Activated CD8-positive, alpha-beta memory T cell treated with anti-CD3 and anti-CD28 coated beads, Interleukin-2, amount 10 ng/mL, durations not matched to agents 7 days and 5 days (primary cell): ENCODE measurements at regions of chr21 and their contacts with region 1.

Region 1: DNA sequence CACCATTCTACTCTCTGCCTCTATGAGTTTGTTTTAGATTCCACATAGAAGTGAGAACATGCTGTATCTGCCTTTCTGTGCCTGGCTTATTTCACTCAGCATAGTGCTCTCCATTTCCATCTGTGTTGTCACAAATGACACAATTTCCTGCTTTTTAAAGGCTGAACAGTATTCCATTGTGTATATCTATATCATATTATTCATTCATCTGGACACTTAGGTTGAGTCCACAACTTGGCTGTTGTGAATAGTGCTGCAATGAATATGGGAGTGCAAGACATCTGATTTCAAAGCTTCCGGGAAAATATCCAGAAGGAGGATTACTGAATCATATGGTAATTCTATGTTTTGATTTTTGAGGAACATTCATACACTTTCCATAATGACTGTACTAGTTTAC is 20.1 kb upstream of the DONSON start:
- DNase-seq: no peak
- ATAC-seq: no peak
- H3K4me3 Mint-ChIP-seq: no peak overlapping the region
- H3K27ac Mint-ChIP-seq: no peak overlapping the region
- H3K4me1 Mint-ChIP-seq: peaks cover 3% of the 10 kb centered on the region
- H3K27me3 Mint-ChIP-seq: no peaks in the 10 kb centered on the region

Region 2: DNA sequence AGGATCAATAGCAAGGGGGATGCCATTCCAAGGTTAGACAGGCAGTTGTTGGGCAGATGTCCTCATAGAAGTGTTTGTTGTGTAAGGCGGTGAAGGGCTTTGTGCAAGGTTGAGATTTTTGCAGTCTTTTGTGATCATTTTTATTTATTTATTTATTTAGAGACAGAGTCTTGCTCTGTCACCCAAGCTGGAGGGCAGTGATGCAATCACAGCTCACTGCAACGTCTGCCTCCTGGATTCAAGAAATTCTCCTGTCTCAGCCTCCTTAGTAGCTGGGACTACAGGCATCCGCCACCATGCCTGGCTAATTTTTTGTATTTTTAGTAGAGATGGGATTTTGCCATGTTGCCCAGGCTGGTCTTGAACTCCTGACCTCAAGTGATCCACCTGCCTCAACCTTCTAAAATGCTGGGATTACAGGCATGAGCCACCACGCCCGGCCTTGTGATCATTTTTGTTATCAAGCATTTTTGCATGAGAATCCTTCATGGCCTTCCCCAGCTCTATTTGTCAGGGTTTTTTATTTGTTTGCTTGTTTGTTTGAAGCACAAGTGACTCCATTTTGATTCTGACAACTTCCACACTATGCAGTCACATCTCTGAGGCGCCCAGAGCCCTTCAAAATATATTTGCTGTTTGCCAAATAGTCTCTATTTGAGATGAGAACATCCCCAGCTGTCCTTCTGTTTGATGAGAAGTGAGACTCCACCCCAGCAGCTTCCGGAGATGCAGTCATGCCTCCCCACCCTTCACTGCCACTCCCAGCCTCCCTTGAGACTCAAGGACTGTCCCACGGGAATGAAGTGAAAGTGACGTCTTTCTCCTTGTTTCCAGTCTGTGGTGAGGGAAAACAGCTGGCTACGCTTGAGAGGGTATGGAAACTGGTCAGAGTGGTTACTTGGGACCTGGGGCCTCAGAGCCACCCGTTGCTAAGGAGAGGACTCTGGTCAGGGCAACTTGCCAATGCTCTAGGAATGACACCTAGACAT is 166.8 kb before region 1 on chr21:
- CTCF ChIA-PET with region 1: interaction called, 10 read pairs
- DNase-seq: no peak
- ATAC-seq: no peak
- H3K4me3 Mint-ChIP-seq: no peak overlapping the region
- H3K27ac Mint-ChIP-seq: no peak overlapping the region
- H3K4me1 Mint-ChIP-seq: peaks cover 3% of the 10 kb centered on the region
- H3K27me3 Mint-ChIP-seq: no peaks in the 10 kb centered on the region

Region 3: GRCh38 chr21:33518899-33519298 is 89.7 kb before region 1 on chr21:
- CTCF ChIA-PET with region 1: interaction called, 16 read pairs
- DNase-seq: no peak
- ATAC-seq: no peak
- H3K4me3 Mint-ChIP-seq: no peak overlapping the region
- H3K27ac Mint-ChIP-seq: no peak overlapping the region
- H3K4me1 Mint-ChIP-seq: peaks cover 14% of the 10 kb centered on the region
- H3K27me3 Mint-ChIP-seq: no peaks in the 10 kb centered on the region

Region 4: DNA sequence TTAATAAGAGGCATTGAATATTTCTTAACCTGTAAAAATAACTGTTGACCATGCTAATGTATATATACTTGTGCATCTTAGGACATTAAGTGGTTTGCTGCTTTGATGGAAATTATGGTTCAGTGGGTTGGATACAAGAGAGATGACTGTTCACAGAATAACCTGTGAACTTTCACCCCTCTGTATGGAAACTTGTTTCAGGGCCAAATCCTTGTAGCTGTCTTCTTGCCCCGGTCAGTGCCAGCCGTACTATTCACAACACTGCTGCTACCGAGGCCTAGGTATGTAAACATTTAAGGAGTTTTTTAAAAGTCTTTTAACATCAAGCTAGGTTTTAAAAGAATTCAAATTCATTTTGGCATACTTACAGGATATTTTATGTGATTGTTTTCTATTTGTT is 36.2 kb before region 1 on chr21:
- CTCF ChIA-PET with region 1: interaction called, 15 read pairs
- DNase-seq: no peak
- ATAC-seq: no peak
- H3K4me3 Mint-ChIP-seq: no peak overlapping the region
- H3K27ac Mint-ChIP-seq: no peak overlapping the region
- H3K4me1 Mint-ChIP-seq: peaks cover 12% of the 10 kb centered on the region
- H3K27me3 Mint-ChIP-seq: no peaks in the 10 kb centered on the region

Region 5: DNA sequence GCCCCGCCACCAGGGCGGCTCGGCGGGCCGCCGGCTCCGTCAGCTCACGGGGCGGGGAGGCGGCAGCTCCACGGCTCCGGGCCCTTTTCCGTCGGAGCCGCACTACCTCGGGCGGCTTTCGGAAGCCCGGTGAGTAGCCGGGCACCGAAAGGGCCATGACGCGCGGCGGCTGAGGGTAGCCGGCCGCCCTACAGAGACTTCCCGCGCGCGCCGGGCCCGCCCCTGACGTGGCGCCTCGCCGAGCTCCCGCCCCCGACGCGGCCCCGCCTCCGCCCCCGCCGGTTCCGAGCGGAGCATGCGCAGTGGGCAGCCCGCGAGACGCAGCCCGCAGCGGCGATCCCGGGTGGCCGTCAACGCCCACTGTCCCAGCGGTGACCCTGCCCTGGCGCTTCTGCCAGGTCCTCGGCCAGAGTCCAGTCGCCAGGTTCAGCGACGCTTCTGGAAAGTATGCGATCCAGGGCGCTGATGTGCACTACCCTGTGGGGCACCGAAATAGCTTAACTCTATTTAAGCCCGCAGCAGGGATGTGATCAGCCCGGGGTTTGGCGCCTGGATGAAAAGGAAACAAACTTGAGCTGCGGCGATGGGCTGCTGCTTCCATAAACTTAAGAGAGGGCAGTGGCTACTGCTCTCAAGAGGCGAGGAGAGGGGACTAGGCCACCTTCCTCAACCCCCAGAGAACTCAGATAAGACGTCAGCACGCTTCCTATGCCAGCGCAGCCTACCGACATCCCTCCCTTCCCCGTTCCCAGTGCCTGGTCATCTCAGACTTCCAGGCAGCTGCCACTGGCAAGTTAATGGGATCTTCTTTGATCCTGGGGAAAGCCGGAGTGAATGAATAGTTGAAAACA is 19.8 kb before region 1 on chr21 and contains the start of gene DONSON:
- CTCF ChIA-PET with region 1: interaction called, 21 read pairs
- DNase-seq: peak; percentile 89
- ATAC-seq: peak; percentile 96
- H3K4me3 Mint-ChIP-seq: peak within 1 kb of the TSS; percentile 91
- H3K27ac Mint-ChIP-seq: peak within 1 kb of the TSS; percentile 88
- H3K4me1 Mint-ChIP-seq: peaks cover 29% of the 10 kb centered on the region
- H3K27me3 Mint-ChIP-seq: no peaks in the 10 kb centered on the region
- total RNA-seq, gene DONSON: 41.6 to 46.3 TPM

Region 6: GRCh38 chr21:33619726-33620125 is 11.2 kb after region 1 on chr21:
- CTCF ChIA-PET with region 1: interaction called, 17 read pairs
- DNase-seq: no peak
- ATAC-seq: no peak
- H3K4me3 Mint-ChIP-seq: no peak overlapping the region
- H3K27ac Mint-ChIP-seq: no peak overlapping the region
- H3K4me1 Mint-ChIP-seq: no peaks in the 10 kb centered on the region
- H3K27me3 Mint-ChIP-seq: no peaks in the 10 kb centered on the region

Region 7: GRCh38 chr21:33668180-33668579 is 59.6 kb after region 1 on chr21:
- CTCF ChIA-PET with region 1: no interaction called
- DNase-seq: no peak
- ATAC-seq: no peak
- H3K4me3 Mint-ChIP-seq: no peak overlapping the region
- H3K27ac Mint-ChIP-seq: no peak overlapping the region
- H3K4me1 Mint-ChIP-seq: no peaks in the 10 kb centered on the region
- H3K27me3 Mint-ChIP-seq: peaks cover 2% of the 10 kb centered on the region